HEK293 (cell line): ENCODE measurements at regions of chr12 and their contacts with region 1.

Region 1: GRCh38 chr12:131454418-131455217 is 256.3 kb upstream of the SFSWAP start:
- H3K4me3 ChIP-seq: no peak overlapping the region
- H3K27ac ChIP-seq: no peak overlapping the region
- H3K4me1 ChIP-seq: no peaks in the 10 kb centered on the region
- CTCF ChIP-seq: peak; percentile 77

Region 2: DNA sequence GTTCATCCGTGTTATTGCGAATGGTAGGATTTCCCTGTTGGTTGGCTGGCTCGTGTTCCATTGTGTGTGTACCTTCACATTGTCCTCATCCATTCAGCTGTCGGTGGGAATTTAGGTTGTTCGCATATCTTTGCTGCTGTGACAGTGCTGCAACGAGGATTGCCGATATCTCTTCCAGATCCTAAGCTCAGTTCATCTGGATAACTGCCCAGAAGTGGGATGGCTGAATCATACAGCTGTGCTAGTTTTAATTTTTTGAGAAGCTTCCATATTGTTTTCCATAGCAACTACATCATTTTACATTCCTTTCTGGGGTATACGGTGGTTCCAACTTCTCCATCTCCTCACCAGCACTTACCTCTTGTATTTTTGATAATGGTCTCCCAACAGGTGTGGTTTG is 36.5 kb before region 1 on chr12:
- CTCF ChIA-PET with region 1: interaction called, 16 read pairs
- POLR2A ChIA-PET with region 1: no interaction called
- H3K4me3 ChIP-seq: no peak overlapping the region
- H3K27ac ChIP-seq: no peak overlapping the region
- H3K4me1 ChIP-seq: no peaks in the 10 kb centered on the region
- CTCF ChIP-seq: no peak